Activated CD8-positive, alpha-beta T cell treated with anti-CD3 and anti-CD28 coated beads, Interleukin-2, amount 10 ng/mL, durations not matched to agents 7 days and 5 days (primary cell): ENCODE measurements at regions of chr9 and their contacts with region 1.

Region 1: DNA sequence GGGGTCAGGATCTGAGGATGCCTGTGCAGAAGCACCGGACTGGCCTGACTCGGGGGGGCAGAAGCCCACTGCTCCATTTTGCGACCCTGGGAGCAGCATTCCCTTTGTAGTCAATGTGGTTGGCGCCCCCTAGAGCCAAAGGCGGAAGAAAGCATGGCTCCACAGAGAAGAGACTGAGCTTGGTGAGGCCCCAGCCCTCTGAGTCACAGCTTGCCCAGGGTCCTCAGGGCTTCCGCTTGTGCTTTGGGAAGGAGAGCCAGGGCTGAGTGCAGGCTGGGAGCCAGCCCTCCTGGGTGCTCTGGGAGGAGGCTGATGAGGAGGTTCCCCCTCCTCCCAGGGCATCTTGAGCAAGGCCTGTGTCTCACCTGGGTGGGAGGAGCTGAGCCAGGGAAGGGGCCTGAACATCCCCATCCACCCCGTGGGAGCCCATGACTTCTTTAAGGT is 5.5 kb upstream of the AQP3 start:
- DNase-seq: peak; percentile 68
- ATAC-seq: peak; percentile 77
- H3K4me3 Mint-ChIP-seq: no peak overlapping the region
- H3K27ac Mint-ChIP-seq: peak overlapping the region; percentile 84
- H3K4me1 Mint-ChIP-seq: peaks cover 62% of the 10 kb centered on the region
- H3K27me3 Mint-ChIP-seq: no peaks in the 10 kb centered on the region

Region 2: DNA sequence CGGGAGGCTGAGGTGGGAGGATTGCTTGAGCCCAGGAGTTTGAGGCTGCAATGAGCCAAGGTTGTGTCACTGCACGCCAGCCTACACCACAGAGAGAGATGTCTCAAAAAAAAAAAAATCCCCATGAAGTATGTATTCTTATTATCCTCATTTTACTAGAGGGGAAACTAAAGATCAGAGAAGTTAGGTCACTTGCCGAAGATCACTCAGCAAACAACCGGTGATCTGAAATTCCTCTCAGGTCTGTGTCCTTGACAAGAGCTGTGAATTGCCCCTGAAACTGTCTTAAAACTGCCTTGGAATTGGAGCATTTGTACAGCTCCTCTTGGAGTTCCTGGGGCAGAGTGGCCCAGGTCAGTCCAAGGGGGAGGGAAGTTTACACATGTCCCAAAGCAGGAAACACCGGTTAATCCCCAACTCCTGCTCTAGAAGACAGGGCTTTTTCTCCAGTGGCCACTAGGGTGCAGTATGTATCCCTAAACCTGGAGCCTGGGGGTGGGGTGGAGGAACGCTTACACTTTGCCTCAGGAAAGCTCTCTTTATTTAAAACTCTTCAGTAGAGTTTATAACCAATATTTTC is 78.1 kb before region 1 on chr9:
- CTCF ChIA-PET with region 1: interaction called, 28 read pairs
- POLR2A ChIA-PET with region 1: interaction called, 5 read pairs
- DNase-seq: peak; percentile 81
- ATAC-seq: peak; percentile 85
- H3K4me3 Mint-ChIP-seq: no peak overlapping the region
- H3K27ac Mint-ChIP-seq: peak overlapping the region; percentile 35
- H3K4me1 Mint-ChIP-seq: peaks cover 12% of the 10 kb centered on the region
- H3K27me3 Mint-ChIP-seq: no peaks in the 10 kb centered on the region

Region 3: GRCh38 chr9:33404788-33405362 is 48.0 kb before region 1 on chr9:
- CTCF ChIA-PET with region 1: interaction called, 209 read pairs
- POLR2A ChIA-PET with region 1: no interaction called
- DNase-seq: no peak
- ATAC-seq: no peak
- H3K4me3 Mint-ChIP-seq: no peak overlapping the region
- H3K27ac Mint-ChIP-seq: no peak overlapping the region
- H3K4me1 Mint-ChIP-seq: peaks cover 7% of the 10 kb centered on the region
- H3K27me3 Mint-ChIP-seq: peaks cover 5% of the 10 kb centered on the region

Region 4: DNA sequence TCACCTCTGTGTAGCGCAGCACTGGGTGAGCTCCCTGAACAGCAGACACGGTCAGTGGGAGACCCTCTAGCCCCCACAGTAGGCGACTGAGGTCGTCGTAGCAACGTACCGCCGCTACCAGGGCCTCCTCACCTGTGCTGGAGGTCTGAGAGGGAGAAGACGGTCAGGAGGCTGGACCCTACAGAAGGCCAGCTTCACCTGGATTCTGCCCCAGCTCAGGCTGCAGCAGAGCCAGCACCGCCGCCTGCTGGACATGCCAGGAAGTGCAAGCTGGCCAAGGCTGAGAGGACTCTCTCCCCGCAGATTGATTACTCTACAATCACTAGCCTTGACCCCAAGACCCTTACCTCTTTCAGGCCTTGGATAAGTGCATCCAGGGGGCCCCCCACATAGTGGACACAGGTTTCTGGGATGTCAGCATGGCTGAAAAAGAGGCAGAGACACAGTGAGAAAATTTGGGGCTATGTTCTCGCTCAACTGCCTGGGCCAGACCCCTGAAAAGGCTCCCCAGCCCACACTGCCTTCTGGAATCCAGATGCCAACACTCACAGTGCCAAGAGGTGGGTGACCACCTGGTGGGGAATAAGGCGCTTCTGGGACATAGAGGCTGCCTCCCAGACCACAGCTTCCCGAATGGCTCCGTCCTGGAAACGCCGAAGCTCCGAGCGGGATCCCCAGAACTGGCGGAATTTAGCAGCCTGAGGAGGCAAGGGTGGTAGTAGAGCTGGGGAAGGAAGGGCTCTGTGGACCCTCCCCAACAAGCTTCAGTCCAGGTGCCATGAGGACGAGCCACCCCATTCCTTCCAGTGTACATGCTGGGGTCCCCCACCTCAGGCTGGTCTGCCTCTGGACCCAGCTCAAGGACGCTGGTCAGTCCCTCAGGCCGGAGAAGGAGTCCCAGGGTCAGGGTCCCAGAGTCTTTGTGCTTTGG is 14.0 kb after region 1 on chr9:
- CTCF ChIA-PET with region 1: interaction called, 141 read pairs
- POLR2A ChIA-PET with region 1: interaction called, 12 read pairs
- DNase-seq: peak; percentile 79
- ATAC-seq: peak; percentile 71
- H3K4me3 Mint-ChIP-seq: no peak overlapping the region
- H3K27ac Mint-ChIP-seq: peak overlapping the region; percentile 25
- H3K4me1 Mint-ChIP-seq: peaks cover 7% of the 10 kb centered on the region
- H3K27me3 Mint-ChIP-seq: no peaks in the 10 kb centered on the region

Region 5: DNA sequence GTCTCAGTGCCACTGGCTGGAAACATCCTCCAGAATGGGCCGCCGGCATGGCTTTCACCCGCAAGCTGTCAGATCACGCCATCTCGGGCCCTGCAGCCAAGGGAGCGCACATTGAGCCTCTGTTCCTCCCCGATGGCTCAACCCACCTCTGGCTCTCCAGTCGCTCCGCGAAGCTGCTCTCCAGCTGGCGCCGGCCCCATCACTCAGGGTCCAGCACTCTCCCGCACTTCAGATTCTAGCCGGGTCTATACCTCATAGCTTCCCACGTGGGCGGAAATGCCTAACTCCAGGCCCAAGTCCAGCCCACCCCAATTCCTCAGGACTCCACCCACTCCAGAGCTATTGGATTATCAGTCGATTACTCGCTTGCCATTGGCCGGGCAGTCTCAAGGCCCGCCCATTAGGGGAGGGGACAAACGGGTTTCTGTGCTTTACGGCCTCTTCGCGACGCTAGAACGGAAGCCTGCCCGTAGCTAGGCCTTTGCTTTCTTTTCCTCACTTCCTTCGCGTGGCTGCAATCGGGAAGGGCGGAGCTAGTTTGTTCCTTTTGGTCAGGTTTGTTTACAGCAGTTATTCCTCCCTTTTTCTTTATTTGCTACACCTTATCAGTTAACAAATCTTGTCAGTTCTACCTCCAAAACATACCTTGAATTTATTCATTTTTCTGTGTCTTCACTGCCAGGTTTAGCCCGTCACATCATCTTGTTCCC is 20.9 kb after region 1 on chr9 and contains the start of gene NOL6:
- CTCF ChIA-PET with region 1: interaction called, 141 read pairs
- POLR2A ChIA-PET with region 1: interaction called, 6 read pairs
- DNase-seq: peak; percentile 99
- ATAC-seq: peak; percentile 100
- H3K4me3 Mint-ChIP-seq: peak within 1 kb of the TSS; percentile 98
- H3K27ac Mint-ChIP-seq: peak within 1 kb of the TSS; percentile 95
- H3K4me1 Mint-ChIP-seq: peaks cover 28% of the 10 kb centered on the region
- H3K27me3 Mint-ChIP-seq: no peaks in the 10 kb centered on the region
- total RNA-seq, gene NOL6: 37.1 to 38.8 TPM